Activated CD8-positive, alpha-beta memory T cell treated with anti-CD3 and anti-CD28 coated beads, Interleukin-2, amount 10 ng/mL, durations not matched to agents 7 days and 5 days (primary cell): ENCODE measurements at regions of chr17 and their contacts with region 1.

Region 1: GRCh38 chr17:3738562-3739295 is 15.0 kb downstream of the HASPIN start:
- DNase-seq: peak; percentile 80
- ATAC-seq: peak; percentile 63
- H3K4me3 Mint-ChIP-seq: no peak overlapping the region
- H3K27ac Mint-ChIP-seq: peak overlapping the region; percentile 34
- H3K4me1 Mint-ChIP-seq: peaks cover 58% of the 10 kb centered on the region
- H3K27me3 Mint-ChIP-seq: no peaks in the 10 kb centered on the region

Region 2: GRCh38 chr17:3710951-3711383 is 27.8 kb before region 1 on chr17:
- CTCF ChIA-PET with region 1: interaction called, 10 read pairs
- DNase-seq: peak; percentile 90
- ATAC-seq: peak; percentile 99
- H3K4me3 Mint-ChIP-seq: peak overlapping the region; percentile 35
- H3K27ac Mint-ChIP-seq: peak overlapping the region; percentile 83
- H3K4me1 Mint-ChIP-seq: peaks cover 54% of the 10 kb centered on the region
- H3K27me3 Mint-ChIP-seq: no peaks in the 10 kb centered on the region

Region 3: DNA sequence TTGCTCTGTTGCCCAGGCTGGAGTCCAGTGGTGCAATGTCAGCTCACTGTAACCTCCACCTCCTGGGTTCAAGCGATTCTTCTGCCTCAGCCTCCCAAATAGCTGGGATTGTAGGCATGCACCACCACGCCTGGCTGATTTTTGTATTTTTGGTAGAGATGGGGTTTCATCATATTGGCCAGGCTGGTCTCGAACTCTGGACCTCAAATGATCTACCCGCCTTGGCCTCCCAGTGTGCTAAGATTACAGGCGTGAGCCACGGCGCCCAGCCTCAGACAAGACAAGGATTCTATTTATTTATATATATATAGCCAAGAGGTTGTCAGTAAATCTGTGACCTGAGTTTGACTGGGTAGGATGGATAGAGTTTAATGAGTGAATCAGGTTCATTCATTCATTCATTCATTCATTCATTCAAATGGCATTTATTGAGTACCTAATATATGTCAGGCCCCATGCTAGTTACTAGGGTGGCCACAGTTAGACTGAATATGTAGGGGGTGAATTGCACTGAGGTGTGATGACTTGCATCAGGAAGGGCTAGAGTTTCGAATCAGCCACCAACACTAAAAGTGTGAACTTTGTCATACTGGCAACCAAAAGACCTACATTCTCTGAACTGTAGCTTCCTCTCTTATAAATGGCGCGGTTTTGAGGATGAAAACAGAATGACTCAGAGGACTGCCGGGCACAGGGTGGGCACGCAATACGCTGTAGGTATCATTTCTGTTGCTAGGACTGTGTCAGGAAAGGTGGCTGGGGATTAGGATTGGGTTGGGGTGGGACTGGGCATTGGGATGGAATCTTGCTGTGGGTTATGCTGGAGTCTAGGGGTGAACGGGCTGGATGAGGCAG is 24.4 kb after region 1 on chr17:
- CTCF ChIA-PET with region 1: interaction called, 102 read pairs
- DNase-seq: peak; percentile 86
- ATAC-seq: peak; percentile 73
- H3K4me3 Mint-ChIP-seq: peak overlapping the region; percentile 65
- H3K27ac Mint-ChIP-seq: peak overlapping the region; percentile 96
- H3K4me1 Mint-ChIP-seq: peaks cover 73% of the 10 kb centered on the region
- H3K27me3 Mint-ChIP-seq: no peaks in the 10 kb centered on the region

Region 4: GRCh38 chr17:3788200-3788599 is 49.5 kb after region 1 on chr17:
- CTCF ChIA-PET with region 1: interaction called, 19 read pairs
- DNase-seq: no peak
- ATAC-seq: peak; percentile 54
- H3K4me3 Mint-ChIP-seq: peak overlapping the region; percentile 20
- H3K27ac Mint-ChIP-seq: peak overlapping the region; percentile 78
- H3K4me1 Mint-ChIP-seq: peaks cover 65% of the 10 kb centered on the region
- H3K27me3 Mint-ChIP-seq: peaks cover 4% of the 10 kb centered on the region

Region 5: DNA sequence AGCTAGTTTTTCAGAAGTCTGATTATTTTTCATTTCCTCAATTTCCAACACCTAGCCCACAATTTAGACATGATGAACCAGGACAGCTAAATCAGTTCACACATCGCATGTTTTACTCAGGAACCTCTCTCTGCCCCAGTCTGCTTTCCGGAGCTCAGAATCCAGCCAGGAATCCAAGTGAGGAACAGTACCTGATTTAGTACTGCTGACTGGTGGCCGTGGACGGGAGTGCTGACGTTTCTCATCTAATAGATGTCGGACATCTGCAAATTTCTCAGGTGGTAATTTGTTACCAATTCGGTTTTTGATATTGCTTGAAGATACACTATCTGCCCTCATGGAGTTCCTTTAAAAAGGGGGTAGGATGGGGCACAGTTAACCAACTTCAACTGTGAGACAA is 77.2 kb after region 1 on chr17:
- CTCF ChIA-PET with region 1: interaction called, 84 read pairs
- DNase-seq: no peak
- ATAC-seq: no peak
- H3K4me3 Mint-ChIP-seq: no peak overlapping the region
- H3K27ac Mint-ChIP-seq: no peak overlapping the region
- H3K4me1 Mint-ChIP-seq: peaks cover 2% of the 10 kb centered on the region
- H3K27me3 Mint-ChIP-seq: no peaks in the 10 kb centered on the region

Region 6: GRCh38 chr17:3835410-3836229 is 96.9 kb after region 1 on chr17:
- CTCF ChIA-PET with region 1: interaction called, 25 read pairs
- DNase-seq: peak; percentile 32
- ATAC-seq: no peak
- H3K4me3 Mint-ChIP-seq: no peak overlapping the region
- H3K27ac Mint-ChIP-seq: no peak overlapping the region
- H3K4me1 Mint-ChIP-seq: peaks cover 13% of the 10 kb centered on the region
- H3K27me3 Mint-ChIP-seq: no peaks in the 10 kb centered on the region